GM18951 (cell line): ENCODE measurements at regions of chr15 and their contacts with region 1.

Region 1: GRCh38 chr15:40044717-40045571 is 6.0 kb upstream of the SRP14 start:
- POLR2A ChIP-seq: no peak

Region 2: GRCh38 chr15:40098489-40099261 is 53.7 kb after region 1 on chr15:
- in situ Hi-C with region 1: loop called (anchors 5 kb)
- POLR2A ChIP-seq: peak; percentile 44

Region 3: DNA sequence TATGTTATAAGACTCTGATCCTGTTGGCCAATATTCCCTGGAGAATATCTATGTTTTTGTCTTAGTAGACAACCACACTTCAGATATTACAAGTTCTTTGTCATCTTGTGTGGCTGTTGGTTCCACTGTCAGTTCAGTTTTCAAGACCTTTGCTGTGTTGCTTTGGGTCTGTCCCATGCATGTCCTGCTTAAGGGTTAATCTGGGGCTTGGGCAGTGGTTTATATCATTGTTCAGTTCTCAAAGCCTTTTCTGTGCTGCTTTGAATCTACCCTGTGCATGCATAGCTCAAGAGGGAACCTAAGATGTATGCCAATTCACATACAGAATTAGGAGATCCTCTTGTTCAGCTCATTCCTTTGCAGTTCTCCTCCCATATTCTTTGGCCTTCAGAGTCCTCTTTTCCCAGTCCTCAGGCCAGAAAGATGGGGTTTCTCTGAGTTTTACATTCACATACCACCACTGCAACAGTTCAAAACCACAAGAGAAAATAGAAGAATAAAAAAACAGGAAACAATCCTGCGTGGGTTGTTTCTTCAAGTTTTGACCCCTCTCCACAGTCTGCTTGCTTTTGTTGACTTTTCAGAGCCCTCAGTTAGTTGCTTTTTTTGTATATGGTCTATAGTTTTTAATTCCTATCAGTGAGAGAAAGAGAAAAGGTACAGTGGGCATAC is 137.6 kb after region 1 on chr15:
- in situ Hi-C with region 1: loop called (anchors 10 kb)
- POLR2A ChIP-seq: no peak

Region 4: DNA sequence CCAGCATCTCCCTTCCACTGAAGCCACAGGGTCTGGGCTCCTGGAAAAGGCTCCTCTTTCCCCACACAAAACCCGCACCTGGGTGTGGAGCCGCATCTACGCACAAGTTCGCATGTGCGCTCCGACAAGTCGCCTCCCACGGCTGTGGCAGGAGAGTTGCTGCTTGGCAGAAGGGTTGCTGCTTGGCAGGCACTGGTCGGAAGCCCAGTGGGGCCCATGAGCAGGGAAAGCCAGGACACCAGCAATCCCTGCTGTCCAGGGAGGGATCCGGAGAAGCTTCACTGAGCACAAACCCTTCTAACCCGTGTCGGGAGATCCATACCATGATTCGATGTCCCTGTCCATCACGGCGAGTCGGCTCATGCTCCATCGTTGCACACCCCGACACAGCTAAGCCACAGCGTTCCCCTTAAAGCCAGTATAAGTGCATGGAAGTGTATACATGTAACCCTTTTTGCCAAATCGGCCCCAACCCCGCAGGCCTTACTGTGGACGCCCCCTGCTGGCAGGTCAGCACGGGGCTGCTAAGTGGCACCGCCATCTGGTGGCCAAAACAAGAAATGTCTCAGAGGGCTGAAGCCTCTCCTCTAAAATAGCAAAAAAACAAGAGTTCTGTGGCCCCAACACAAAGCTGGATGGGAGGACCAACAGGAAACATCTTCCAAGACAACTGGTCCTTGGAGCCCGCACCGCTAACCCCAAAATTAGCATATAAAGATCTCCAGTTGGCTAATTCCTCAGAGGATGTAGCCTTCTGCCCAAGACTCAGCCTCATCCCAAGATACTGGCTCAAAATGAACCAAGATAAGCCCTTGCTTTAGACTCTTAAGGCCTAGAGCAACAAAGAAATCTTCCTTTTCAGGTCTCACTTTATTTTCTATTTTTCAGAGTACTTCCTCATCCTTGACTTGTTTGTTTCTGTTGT is 229.7 kb after region 1 on chr15:
- in situ Hi-C with region 1: loop called (anchors 10 kb)
- POLR2A ChIP-seq: no peak

Region 5: GRCh38 chr15:40941528-40942336 is 896.8 kb after region 1 on chr15:
- in situ Hi-C with region 1: no loop called
- POLR2A ChIP-seq: peak; percentile 62